Activated CD4-positive, alpha-beta T cell treated with anti-CD3 and anti-CD28 coated beads for 36 hours (primary cell): ENCODE measurements at regions of chr11 and their contacts with region 1.

Region 1: GRCh38 chr11:120511116-120511819 is at the start of gene GRIK4:
- DNase-seq: peak; percentile 89
- ATAC-seq: peak; percentile 95
- H3K4me3 Mint-ChIP-seq: no peak within 1 kb of the TSS
- H3K27ac Mint-ChIP-seq: no peak within 1 kb of the TSS
- H3K4me1 Mint-ChIP-seq: peaks cover 2% of the 10 kb centered on the region
- H3K27me3 Mint-ChIP-seq: peaks cover 71% of the 10 kb centered on the region
- total RNA-seq, gene GRIK4: not detected

Region 2: GRCh38 chr11:120335908-120336640 is 175.2 kb before region 1 on chr11 and contains the start of gene ARHGEF12:
- CTCF ChIA-PET with region 1: no interaction called
- POLR2A ChIA-PET with region 1: no interaction called
- intact Hi-C with region 1: loop called in 1 of 2 experiments (anchors 2 kb)
- DNase-seq: peak; percentile 91
- ATAC-seq: peak; percentile 70
- H3K4me3 Mint-ChIP-seq: peak within 1 kb of the TSS; percentile 84
- H3K27ac Mint-ChIP-seq: peak within 1 kb of the TSS; percentile 55
- H3K4me1 Mint-ChIP-seq: peaks cover 29% of the 10 kb centered on the region
- H3K27me3 Mint-ChIP-seq: peaks cover 41% of the 10 kb centered on the region
- total RNA-seq, gene ARHGEF12: 14.3 to 14.5 TPM

Region 3: DNA sequence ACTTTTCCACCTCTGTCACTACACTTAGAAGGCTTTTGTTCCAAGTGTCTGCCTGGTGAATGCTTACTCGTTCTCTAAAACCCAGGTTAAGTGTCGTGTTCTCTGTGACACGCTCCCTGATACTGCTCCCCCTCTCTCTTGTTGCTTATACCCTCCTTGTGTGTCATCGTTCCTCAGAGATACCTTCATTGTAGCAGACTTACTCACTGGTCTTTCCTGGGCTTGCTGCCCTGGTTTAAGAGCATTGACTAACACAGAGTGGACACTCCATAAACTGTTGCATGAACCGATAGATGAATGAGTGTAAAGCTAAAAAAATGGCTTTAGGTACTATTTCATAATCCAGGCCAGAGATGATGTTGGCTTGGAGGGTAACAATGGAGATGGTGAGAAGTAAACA is 171.6 kb after region 1 on chr11:
- CTCF ChIA-PET with region 1: interaction called, 15 read pairs
- POLR2A ChIA-PET with region 1: no interaction called
- intact Hi-C with region 1: loop called (anchors 1 kb)
- DNase-seq: no peak
- ATAC-seq: no peak
- H3K4me3 Mint-ChIP-seq: no peak overlapping the region
- H3K27ac Mint-ChIP-seq: no peak overlapping the region
- H3K4me1 Mint-ChIP-seq: no peaks in the 10 kb centered on the region
- H3K27me3 Mint-ChIP-seq: peaks cover 29% of the 10 kb centered on the region

Region 4: GRCh38 chr11:120744016-120744994 is 233.0 kb after region 1 on chr11:
- CTCF ChIA-PET with region 1: no interaction called
- POLR2A ChIA-PET with region 1: no interaction called
- intact Hi-C with region 1: no loop called
- DNase-seq: no peak
- ATAC-seq: no peak
- H3K4me3 Mint-ChIP-seq: no peak overlapping the region
- H3K27ac Mint-ChIP-seq: no peak overlapping the region
- H3K4me1 Mint-ChIP-seq: no peaks in the 10 kb centered on the region
- H3K27me3 Mint-ChIP-seq: peaks cover 25% of the 10 kb centered on the region

Region 5: DNA sequence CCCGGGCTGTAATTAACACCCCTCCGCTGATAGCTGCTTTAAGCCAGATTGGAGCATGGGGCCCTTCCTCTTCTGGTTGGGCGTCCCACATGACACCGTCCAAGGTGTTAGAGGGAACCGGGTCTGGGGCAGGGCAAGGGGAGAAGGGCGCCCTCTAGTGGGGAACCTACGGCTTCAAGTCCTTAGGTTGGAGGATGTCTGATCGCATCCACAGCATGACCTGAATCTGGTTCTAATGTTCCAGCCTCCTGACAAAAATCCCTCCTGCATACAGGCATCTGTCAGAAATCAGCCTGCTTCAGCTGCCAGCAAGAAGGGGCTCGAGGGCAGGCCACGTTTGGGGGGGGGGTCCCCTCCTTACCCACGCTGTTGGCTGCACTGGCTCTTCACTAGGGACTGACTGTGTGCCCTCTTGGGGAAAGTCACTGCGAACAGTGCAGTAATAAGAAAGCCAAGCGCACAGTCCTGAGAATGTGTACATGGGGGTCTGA is 418.4 kb after region 1 on chr11:
- CTCF ChIA-PET with region 1: interaction called, 3 read pairs
- POLR2A ChIA-PET with region 1: no interaction called
- intact Hi-C with region 1: loop called in 1 of 2 experiments (anchors 1 kb)
- DNase-seq: peak; percentile 76
- ATAC-seq: peak; percentile 74
- H3K4me3 Mint-ChIP-seq: no peak overlapping the region
- H3K27ac Mint-ChIP-seq: no peak overlapping the region
- H3K4me1 Mint-ChIP-seq: no peaks in the 10 kb centered on the region
- H3K27me3 Mint-ChIP-seq: no peaks in the 10 kb centered on the region

Region 6: GRCh38 chr11:121112498-121113455 is 601.5 kb after region 1 on chr11:
- CTCF ChIA-PET with region 1: no interaction called
- POLR2A ChIA-PET with region 1: no interaction called
- intact Hi-C with region 1: loop called in 1 of 2 experiments (anchors 1 kb)
- DNase-seq: peak; percentile 64
- ATAC-seq: peak; percentile 88
- H3K4me3 Mint-ChIP-seq: no peak overlapping the region
- H3K27ac Mint-ChIP-seq: no peak overlapping the region
- H3K4me1 Mint-ChIP-seq: no peaks in the 10 kb centered on the region
- H3K27me3 Mint-ChIP-seq: peaks cover 6% of the 10 kb centered on the region